ENCODE measurements at regions of chr11 and their contacts with region 1.

Region 1: DNA sequence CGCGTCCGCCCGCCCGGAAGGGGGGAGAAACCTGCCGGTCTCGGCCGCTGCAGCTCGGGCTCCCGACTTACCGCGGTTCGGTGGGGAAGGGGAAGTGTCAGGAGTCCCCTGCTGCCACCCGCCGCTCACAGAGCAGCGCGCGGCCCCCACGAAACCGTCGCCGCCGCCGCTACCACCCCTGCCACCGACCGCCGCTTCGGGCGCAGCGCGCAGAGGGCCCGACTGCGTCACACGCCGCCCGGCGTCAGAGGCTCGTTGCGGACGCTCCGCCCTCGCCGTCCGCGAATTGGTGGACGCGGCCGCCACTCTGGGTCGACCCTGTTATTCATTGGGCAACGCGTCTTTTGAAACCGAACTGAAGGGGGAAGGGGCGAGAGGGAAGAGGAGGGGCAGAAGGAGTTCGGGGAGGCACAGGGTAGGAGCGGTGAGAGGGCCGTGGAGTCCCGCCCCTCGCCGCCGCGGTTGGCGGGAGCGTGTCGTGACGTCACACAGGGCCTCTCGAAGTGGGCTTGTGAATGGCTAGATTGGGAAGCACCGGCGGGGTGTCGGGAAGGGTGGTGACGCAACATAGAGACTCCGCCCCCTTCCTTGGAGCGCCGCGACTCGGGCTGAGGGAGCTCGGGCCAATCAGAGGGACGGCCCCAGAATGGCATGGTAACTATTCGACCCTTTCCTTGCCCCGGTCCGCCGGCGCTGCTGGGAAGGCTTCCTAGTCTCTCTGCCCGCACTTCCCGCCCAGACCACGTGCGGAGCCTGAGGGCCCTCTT is at the start of gene NUP98:
- DNase-seq: peak; percentile 100
- H3K4me3 Mint-ChIP-seq: peak within 1 kb of the TSS; percentile 99
- H3K27ac Mint-ChIP-seq: peak within 1 kb of the TSS; percentile 95
- H3K4me1 Mint-ChIP-seq: peaks cover 35% of the 10 kb centered on the region
- H3K27me3 Mint-ChIP-seq: no peaks in the 10 kb centered on the region
- total RNA-seq, gene NUP98: 122 and 123 TPM in 2 replicates

Region 2: GRCh38 chr11:2975594-2975993 is 821.9 kb before region 1 on chr11:
- intact Hi-C with region 1: no loop called
- DNase-seq: peak; percentile 14
- H3K4me3 Mint-ChIP-seq: no peak overlapping the region
- H3K27ac Mint-ChIP-seq: no peak overlapping the region
- H3K4me1 Mint-ChIP-seq: peaks cover 29% of the 10 kb centered on the region
- H3K27me3 Mint-ChIP-seq: no peaks in the 10 kb centered on the region

Region 3: DNA sequence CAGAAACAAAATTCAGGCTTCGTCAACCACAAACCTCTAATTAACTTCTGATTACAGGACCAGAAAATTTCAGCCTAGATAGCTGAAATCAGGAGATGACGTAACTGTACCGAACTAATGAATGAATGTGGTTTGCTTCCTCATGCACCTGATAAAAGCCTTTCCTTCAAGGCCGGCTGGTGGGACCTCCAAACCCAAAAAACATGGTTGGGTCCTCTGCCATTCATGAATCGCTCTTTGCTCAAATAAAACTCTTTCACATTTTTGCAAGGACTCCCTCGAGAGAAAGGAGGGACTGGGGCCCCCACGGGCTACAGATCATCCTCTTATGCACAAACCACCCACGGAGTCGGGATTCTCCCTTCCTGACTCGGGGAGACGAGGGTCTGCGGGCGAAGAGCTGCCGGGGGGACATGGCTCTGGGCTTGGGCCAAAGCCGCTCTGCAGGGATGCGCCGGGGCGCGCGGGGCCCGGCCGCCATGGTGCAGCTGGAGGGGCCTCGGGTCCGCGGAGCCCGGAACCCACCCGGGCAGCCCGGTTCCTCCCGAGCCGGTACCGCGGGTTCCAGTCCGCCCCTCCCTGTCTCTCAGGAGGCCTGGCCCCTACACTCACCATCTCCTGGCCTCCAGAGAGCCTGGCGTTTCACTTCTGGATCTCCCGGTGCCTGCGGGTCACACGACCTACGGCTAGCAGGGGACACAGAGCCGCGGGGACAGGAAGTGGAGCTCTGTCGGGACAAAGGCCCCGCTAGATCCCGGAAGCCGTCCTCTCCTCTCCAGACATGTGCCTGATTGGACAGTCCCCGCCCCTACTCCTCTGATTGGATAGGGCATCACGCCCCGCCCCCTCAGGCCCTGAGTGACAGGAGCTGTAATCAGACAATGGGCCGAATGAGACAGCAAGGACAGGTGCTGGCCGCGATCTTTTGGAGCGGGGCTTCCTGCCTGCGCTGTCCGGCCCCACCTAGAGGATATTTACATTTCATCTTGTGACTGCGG is 418.8 kb before region 1 on chr11 and contains the start of gene ZNF195:
- intact Hi-C with region 1: loop called (anchors 5 kb)
- DNase-seq: peak; percentile 98
- H3K4me3 Mint-ChIP-seq: peak within 1 kb of the TSS; percentile 96
- H3K27ac Mint-ChIP-seq: peak within 1 kb of the TSS; percentile 94
- H3K4me1 Mint-ChIP-seq: peaks cover 30% of the 10 kb centered on the region
- H3K27me3 Mint-ChIP-seq: no peaks in the 10 kb centered on the region
- total RNA-seq, gene ZNF195: 41.2 and 42.8 TPM in 2 replicates

Region 4: DNA sequence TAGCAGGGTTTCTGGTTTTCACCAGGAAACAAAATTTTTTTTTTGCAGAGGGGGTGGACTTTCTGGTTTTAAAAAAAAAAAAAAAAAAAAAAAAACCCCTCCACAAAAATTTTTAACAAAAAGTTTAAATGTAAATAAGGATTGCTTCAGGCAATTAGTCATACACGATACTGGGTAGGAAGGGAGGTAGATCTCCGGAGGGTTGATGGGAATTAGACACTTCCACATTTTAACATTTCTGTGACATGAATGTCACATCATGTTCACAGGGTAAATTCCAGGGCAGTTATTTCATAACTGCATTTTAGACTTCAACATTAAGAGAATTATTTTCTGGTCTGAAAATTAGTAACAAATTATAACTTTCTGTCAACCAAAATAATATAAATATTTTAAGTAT is 16.1 kb before region 1 on chr11:
- intact Hi-C with region 1: loop called (anchors 1 kb)
- DNase-seq: no peak
- H3K4me3 Mint-ChIP-seq: peak overlapping the region; percentile 47
- H3K27ac Mint-ChIP-seq: peak overlapping the region; percentile 71
- H3K4me1 Mint-ChIP-seq: peaks cover 58% of the 10 kb centered on the region
- H3K27me3 Mint-ChIP-seq: no peaks in the 10 kb centered on the region

Region 5: DNA sequence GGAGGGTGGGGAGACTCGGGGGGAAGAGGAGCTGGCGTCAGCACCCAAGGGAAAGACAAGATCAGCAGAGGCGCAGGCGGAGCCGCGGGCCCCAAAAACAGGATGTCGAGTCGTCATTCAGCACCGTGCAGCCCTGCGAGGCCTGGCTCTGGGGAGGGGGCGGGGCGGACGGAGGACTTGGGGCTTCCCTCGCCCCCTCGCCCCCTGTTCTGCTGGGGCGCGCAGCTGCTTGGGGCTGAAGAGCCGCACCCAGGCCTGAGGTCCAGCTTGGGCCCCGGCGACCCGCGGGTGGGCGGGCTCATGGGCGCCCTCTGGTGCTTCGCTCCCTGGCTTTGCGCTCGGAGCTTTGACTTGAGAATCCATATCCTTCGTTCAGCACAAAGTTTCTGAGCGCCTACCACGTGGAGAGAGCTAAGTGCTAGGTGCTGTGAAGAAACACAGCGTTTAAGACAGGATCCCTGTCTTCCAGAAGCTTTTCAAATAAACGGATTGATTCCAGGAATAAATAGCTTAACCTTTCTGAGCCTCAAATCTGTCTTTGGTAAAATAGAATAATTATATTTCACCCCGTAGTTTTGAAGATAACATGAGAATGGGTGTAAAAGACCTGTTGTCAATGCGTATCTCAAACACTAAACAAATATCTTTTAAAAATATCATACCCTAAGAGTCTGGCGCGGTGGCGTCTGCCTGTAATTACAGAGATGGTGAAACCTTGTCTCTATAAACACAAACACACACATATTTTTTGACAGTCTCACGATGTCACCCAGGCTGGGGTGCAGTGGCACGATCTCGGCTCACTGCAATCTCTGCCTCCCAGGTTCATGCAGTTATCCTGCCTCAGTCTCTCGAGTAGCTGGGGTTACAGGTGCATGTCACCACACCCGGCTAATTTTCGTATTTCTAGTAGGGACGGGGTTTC is 44.2 kb after region 1 on chr11:
- intact Hi-C with region 1: loop called (anchors 1 kb)
- DNase-seq: peak; percentile 89
- H3K4me3 Mint-ChIP-seq: peak overlapping the region; percentile 81
- H3K27ac Mint-ChIP-seq: peak overlapping the region; percentile 97
- H3K4me1 Mint-ChIP-seq: peaks cover 59% of the 10 kb centered on the region
- H3K27me3 Mint-ChIP-seq: no peaks in the 10 kb centered on the region

Region 6: DNA sequence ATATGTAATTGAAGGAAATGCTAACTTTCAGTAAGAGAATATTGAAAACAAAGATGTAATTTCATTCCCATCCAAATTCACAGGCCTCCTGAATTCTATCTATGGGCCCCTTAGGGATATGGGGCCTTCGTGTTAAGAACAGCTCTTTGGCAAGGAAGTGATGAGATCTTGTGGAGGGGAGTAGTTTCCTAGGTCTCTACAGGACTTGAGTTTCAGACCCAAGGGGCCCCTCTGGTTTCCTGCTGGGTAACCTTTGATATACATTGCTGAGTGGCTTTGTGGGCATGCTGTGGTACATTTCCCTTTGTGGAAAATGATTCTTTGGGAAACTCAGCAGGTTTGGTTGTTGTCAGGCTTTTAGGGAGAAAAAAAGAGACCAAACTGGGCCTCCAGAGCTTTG is 64.2 kb after region 1 on chr11:
- intact Hi-C with region 1: no loop called
- DNase-seq: no peak
- H3K4me3 Mint-ChIP-seq: peak overlapping the region; percentile 63
- H3K27ac Mint-ChIP-seq: peak overlapping the region; percentile 88
- H3K4me1 Mint-ChIP-seq: peaks cover 91% of the 10 kb centered on the region
- H3K27me3 Mint-ChIP-seq: no peaks in the 10 kb centered on the region

Region 7: GRCh38 chr11:3939211-3939610 is 141.7 kb after region 1 on chr11:
- intact Hi-C with region 1: no loop called
- DNase-seq: no peak
- H3K4me3 Mint-ChIP-seq: no peak overlapping the region
- H3K27ac Mint-ChIP-seq: no peak overlapping the region
- H3K4me1 Mint-ChIP-seq: peaks cover 74% of the 10 kb centered on the region
- H3K27me3 Mint-ChIP-seq: no peaks in the 10 kb centered on the region

Region 8: GRCh38 chr11:4094348-4095291 is 297.1 kb after region 1 on chr11 and contains the start of gene RRM1:
- intact Hi-C with region 1: loop called (anchors 1 kb)
- DNase-seq: peak; percentile 93
- H3K4me3 Mint-ChIP-seq: peak within 1 kb of the TSS; percentile 96
- H3K27ac Mint-ChIP-seq: peak within 1 kb of the TSS; percentile 97
- H3K4me1 Mint-ChIP-seq: peaks cover 76% of the 10 kb centered on the region
- H3K27me3 Mint-ChIP-seq: no peaks in the 10 kb centered on the region
- total RNA-seq, gene RRM1: 155 and 173 TPM in 2 replicates

Region 9: GRCh38 chr11:4508886-4509285 is 711.4 kb after region 1 on chr11:
- intact Hi-C with region 1: no loop called
- DNase-seq: no peak
- H3K4me3 Mint-ChIP-seq: no peak overlapping the region
- H3K27ac Mint-ChIP-seq: no peak overlapping the region
- H3K4me1 Mint-ChIP-seq: no peaks in the 10 kb centered on the region
- H3K27me3 Mint-ChIP-seq: peaks cover 10% of the 10 kb centered on the region

Measured in activated T-helper 1 cell treated with anti-CD3 and anti-CD28 coated beads, Interleukin-12 subunit alpha, Interleukin-12 subunit beta, Interleukin-2, Interleukin-4 antibody, amounts not matched to agents 30 ng/mL and 10 ng/mL and 1 ng/mL, durations not matched to agents 14 hours and 24 hours and 36 hours (primary cell).